ENCODE measurements at regions of chr5 and their contacts with region 1.

Region 1: GRCh38 chr5:143002459-143003328 is 232.5 kb downstream of the ARHGAP26 start:
- DNase-seq: no peak
- ATAC-seq: peak; percentile 58
- H3K4me3 Mint-ChIP-seq: no peak overlapping the region
- H3K27ac Mint-ChIP-seq: peak overlapping the region; percentile 51; the same call in 1 of the 2 replicates
- H3K4me1 Mint-ChIP-seq: peaks cover 22% of the 10 kb centered on the region
- H3K27me3 Mint-ChIP-seq: no peaks in the 10 kb centered on the region
- CTCF ChIP-seq: peak; percentile 41; the same call in 1 of the 2 replicates

Region 2: DNA sequence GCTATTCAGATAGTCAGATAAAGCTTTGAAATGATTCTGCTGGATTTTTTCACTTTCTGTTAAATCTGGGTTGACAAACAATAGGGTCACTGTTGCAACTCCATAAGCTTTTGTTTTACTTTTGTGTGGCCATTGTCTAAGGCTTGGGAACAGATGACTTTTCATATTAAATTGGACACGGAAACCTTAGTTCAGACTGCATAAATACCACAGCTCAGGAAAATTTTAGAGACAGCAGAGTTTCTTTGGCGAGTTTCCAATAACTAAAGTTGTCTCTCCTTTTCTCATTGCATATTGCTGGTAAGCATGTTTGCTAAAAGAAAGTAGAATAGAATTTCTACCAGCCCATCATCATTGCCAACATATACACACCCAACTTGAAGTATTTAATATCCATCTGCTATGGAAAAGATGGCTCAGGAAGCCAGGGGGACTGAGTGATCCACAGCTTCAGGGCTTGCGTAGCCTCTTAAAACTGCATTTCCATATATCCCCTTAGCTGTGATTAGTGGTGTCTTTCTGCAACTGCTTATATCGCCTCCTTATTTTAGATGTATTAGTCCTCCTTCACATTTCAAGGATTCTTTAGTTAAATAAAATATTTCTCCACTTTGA is 64.3 kb before region 1 on chr5:
- CTCF ChIA-PET with region 1: no interaction called
- POLR2A ChIA-PET with region 1: no interaction called
- DNase-seq: no peak
- ATAC-seq: no peak
- H3K4me3 Mint-ChIP-seq: no peak overlapping the region
- H3K27ac Mint-ChIP-seq: no peak overlapping the region
- H3K4me1 Mint-ChIP-seq: no peaks in the 10 kb centered on the region
- H3K27me3 Mint-ChIP-seq: no peaks in the 10 kb centered on the region
- CTCF ChIP-seq: no peak

Region 3: DNA sequence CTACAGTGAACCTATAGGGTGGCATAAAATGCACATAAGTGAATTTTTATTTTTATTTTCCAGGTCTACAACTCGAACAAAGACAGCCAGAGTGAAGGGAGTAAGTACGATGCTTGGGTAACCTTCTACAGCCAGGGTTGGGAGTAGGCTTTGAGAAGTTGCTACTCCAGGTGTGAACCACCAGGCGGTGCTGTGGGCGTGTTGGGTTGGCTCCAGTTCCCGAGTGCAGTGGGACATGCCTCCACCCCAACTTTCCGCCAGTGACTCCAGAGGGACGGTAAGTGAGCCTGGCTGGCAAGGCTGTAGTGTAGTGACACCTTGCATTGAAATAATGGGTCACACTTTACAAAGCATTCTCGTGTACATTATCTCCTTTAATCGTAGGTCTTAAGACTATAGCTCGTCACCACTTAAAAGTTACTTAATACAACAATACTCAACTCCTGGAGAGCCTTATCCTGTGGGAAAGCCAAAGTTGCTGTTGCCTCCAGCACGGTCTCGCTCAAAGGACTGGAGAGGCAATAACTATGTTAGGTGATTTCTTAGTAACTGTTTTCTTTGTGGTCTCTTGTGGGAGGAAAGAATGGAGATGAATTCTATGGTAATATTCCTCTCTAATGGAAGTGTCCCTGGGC is 11.4 kb after region 1 on chr5:
- CTCF ChIA-PET with region 1: interaction called, 12 read pairs
- POLR2A ChIA-PET with region 1: no interaction called
- DNase-seq: peak; percentile 79
- ATAC-seq: peak; percentile 96
- H3K4me3 Mint-ChIP-seq: no peak overlapping the region
- H3K27ac Mint-ChIP-seq: peak overlapping the region; percentile 13; the same call in 1 of the 2 replicates
- H3K4me1 Mint-ChIP-seq: peaks cover 60% of the 10 kb centered on the region
- H3K27me3 Mint-ChIP-seq: no peaks in the 10 kb centered on the region
- CTCF ChIP-seq: peak; percentile 89